A549 (cell line): ENCODE measurements at regions of chr9 and their contacts with region 1.

Region 1: GRCh38 chr9:134381671-134382516 is 55.6 kb downstream of the RXRA start:
- DNase-seq: no peak
- ATAC-seq: peak in 1 of 2 experiments; percentile 10; a peak in 1 of 6 replicates
- H3K4me3 ChIP-seq: no peak overlapping the region
- H3K27ac ChIP-seq: peak overlapping the region; percentile 93 to 97
- H3K4me1 ChIP-seq: peaks cover 95% of the 10 kb centered on the region
- CTCF ChIP-seq: peak; percentile 25
- EP300 ChIP-seq: no peak
- POLR2A ChIP-seq: no peak
- RAD21 ChIP-seq: no peak

Region 2: DNA sequence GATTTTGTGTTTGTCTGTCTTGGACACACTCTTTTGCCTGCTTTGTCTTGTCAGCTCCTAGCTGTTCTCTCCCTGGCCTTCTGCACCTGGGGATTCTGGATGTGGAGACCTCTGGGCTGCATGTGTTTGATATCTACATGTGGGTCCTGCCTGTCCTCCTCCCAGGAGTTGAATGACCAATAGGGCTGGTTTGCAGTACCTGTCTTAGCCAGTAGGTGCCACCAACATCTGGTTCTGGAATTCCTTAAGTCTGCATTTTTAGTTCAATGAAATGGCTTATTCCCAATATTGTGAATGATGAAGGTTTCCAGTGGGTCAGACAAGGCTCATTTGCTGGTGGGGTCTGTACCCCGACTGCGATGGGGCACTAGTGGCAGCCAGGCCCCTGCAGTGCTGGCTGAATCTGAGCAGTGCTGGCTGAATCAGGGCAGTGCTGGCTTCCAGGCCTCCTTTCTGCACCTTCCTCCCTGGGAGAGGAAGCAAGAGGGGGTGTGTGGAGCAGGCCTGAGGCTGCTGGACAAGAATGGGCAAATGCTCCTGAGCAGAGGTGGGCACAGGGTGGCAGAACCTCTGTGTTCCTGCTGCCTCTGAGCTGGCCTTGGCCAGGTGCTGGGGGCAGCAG is 17.7 kb after region 1 on chr9:
- CTCF ChIA-PET with region 1: interaction called, 16 read pairs
- POLR2A ChIA-PET with region 1: interaction called, 3 read pairs
- DNase-seq: peak in 1 of 2 experiments; percentile 76
- ATAC-seq: 0 out of 6 replicates have a peak, but pooled peaks of 1 of the 2 experiments have one; percentile 11
- H3K4me3 ChIP-seq: no peak overlapping the region
- H3K27ac ChIP-seq: no peak overlapping the region
- H3K4me1 ChIP-seq: peaks cover 14% of the 10 kb centered on the region; the same call in 2 of the 3 replicates
- CTCF ChIP-seq: peak; percentile 36
- EP300 ChIP-seq: no peak
- POLR2A ChIP-seq: no peak
- RAD21 ChIP-seq: no peak; a peak in 1 of 5 replicates

Region 3: GRCh38 chr9:134407123-134407808 is 25.4 kb after region 1 on chr9:
- CTCF ChIA-PET with region 1: interaction called, 8 read pairs
- POLR2A ChIA-PET with region 1: interaction called, 10 read pairs
- DNase-seq: peak; percentile 96 to 98
- ATAC-seq: peak; percentile 76 to 87
- H3K4me3 ChIP-seq: peak overlapping the region; percentile 33
- H3K27ac ChIP-seq: peak overlapping the region; percentile 99 to 100
- H3K4me1 ChIP-seq: peaks cover 86% of the 10 kb centered on the region
- CTCF ChIP-seq: no peak
- EP300 ChIP-seq: peak in 1 of 2 experiments; percentile 60; a peak in 3 of 5 replicates
- POLR2A ChIP-seq: peak; percentile 70
- RAD21 ChIP-seq: peak in 1 of 2 experiments; percentile 14; a peak in 2 of 5 replicates